GM10248 (cell line): ENCODE measurements at regions of chr2 and their contacts with region 1.

Region 1: GRCh38 chr2:71331581-71332434 is at the start of gene ZNF638:
- DNase-seq: peak; percentile 97
- CTCF ChIP-seq: peak; percentile 71

Region 2: GRCh38 chr2:70671092-70671675 is 660.6 kb before region 1 on chr2:
- CTCF ChIA-PET with region 1: no interaction called
- POLR2A ChIA-PET with region 1: no interaction called
- DNase-seq: no peak
- CTCF ChIP-seq: no peak

Region 3: GRCh38 chr2:71226965-71227560 is 104.7 kb before region 1 on chr2 and contains the start of gene PAIP2B:
- CTCF ChIA-PET with region 1: interaction called, 9 read pairs
- POLR2A ChIA-PET with region 1: interaction called, 12 read pairs
- DNase-seq: peak; percentile 91
- CTCF ChIP-seq: no peak

Region 4: DNA sequence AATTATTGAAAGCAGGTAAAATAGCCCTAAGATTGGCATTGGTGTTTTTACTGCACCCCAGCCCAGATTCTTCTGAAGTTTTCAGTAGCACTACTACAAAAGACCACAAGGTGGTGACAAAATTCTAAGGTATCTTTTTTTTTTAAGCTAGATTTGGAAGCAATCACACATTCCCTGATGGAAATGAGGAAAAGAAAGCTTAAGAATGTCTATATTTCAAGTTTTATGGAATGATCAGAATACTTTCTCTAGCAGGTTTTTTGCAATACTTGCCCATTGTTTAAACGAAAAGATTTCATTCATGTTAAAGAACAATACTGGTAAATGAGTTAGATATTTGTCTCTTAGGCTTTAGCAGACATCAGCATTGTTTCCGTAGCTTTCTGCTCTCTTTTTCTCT is 32.3 kb before region 1 on chr2:
- CTCF ChIA-PET with region 1: interaction called, 27 read pairs
- POLR2A ChIA-PET with region 1: no interaction called
- DNase-seq: peak; percentile 43
- CTCF ChIP-seq: peak; percentile 60

Region 5: DNA sequence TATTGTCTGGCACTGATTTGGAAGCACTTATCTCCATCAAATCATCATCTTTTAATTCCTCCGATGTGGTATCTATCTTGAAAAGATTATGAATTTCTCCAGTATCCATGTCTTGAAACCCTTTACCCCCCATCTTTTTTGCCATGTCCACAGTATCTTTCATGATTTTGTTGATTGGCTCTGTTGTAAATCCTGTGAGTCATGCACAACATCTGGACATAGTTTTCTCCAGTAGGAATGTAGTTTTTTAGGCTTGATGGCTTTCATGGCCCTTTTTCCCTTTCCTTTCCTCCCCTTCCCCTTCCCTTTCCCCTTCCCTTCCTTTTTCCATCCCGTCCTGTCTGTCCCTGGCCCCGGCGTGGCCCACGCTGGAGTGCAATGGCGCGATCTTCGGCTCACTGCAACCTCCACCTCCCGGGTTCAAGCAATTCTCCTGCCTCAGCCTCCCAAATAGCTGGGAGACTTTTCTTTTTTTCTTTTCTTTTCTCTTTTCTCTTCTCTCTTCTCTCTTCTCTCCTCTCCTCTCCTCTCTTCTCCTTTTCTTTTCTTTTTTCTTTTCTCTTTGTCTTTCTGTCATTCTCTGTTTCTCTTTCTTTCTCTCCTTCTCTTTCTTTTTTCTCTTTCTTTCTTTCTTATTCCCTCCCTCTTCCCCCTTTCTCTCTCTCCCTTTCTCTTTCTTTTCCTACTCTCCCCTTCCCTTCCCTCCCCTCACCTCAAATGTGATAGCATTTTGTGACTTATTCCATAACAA is 18.6 kb before region 1 on chr2:
- CTCF ChIA-PET with region 1: interaction called, 10 read pairs
- POLR2A ChIA-PET with region 1: no interaction called
- DNase-seq: no peak
- CTCF ChIP-seq: no peak

Region 6: GRCh38 chr2:71348302-71348701 is 16.5 kb after region 1 on chr2:
- CTCF ChIA-PET with region 1: interaction called, 19 read pairs
- POLR2A ChIA-PET with region 1: interaction called, 3 read pairs
- DNase-seq: no peak
- CTCF ChIP-seq: no peak

Region 7: GRCh38 chr2:71361631-71362030 is 29.8 kb after region 1 on chr2:
- CTCF ChIA-PET with region 1: interaction called, 12 read pairs
- POLR2A ChIA-PET with region 1: interaction called, 4 read pairs
- DNase-seq: peak; percentile 6
- CTCF ChIP-seq: no peak